ENCODE measurements at regions of chr17 and their contacts with region 1.

Region 1: DNA sequence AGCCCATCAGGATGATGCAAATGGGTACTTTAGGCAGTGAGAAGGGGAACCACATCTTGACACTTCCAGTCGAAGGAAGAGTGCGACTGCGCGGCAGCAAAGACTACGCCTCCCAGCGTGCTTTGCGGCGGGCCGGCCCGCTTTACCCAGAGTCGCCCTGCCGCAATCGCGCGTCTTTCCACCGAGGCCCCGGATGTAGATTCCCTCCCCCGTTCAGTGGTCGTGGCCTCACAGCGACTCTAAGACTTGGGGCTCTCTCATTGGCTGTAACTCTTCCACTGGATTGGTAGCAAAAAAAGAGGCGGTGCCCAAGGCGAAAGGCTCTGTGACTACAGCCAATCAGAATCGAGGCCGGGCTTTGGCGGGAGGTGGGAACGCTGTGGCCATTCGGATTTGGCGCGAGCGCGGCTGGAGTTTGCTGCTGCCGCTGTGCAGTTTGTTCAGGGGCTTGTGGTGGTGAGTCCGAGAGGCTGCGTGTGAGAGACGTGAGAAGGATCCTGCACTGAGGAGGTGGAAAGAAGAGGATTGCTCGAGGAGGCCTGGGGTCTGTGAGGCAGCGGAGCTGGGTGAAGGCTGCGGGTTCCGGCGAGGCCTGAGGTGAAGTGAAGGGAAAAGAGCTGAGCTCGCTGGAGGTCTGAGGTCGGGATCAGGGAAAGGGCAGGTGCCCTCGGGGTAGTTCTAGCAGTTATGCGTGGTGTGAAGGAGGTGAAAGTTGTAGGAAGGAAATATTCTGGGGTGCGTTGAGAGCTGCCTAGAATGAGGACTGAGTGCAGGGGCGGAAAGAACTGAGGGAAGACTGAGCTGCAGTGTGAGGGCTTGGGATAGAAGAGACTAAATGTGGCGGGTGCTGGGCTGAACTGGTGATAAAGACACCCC is at the start of gene CDC6:
- DNase-seq: peak; percentile 99
- ATAC-seq: peak; percentile 98
- H3K4me3 ChIP-seq: peak within 1 kb of the TSS in 1 of 2 donors; percentile 12
- H3K27ac ChIP-seq: no peak within 1 kb of the TSS
- H3K4me1 ChIP-seq: peaks cover 0 to 5% of the 10 kb centered on the region in 2 donors
- H3K27me3 ChIP-seq: no peaks in the 10 kb centered on the region
- total RNA-seq, gene CDC6: 1.7 to 2.5 TPM

Region 2: GRCh38 chr17:40019140-40019991 is 268.4 kb before region 1 on chr17:
- intact Hi-C with region 1: loop called in 1 of 2 experiments (anchors 10 kb)
- DNase-seq: peak in 1 of 2 donors; percentile 79
- ATAC-seq: no peak
- H3K4me3 ChIP-seq: no peak overlapping the region
- H3K27ac ChIP-seq: no peak overlapping the region
- H3K4me1 ChIP-seq: no peaks in the 10 kb centered on the region
- H3K27me3 ChIP-seq: no peaks in the 10 kb centered on the region

Region 3: GRCh38 chr17:40098846-40099618 is 188.7 kb before region 1 on chr17:
- intact Hi-C with region 1: loop called in 1 of 2 experiments (anchors 10 kb)
- DNase-seq: peak; percentile 100
- ATAC-seq: peak; percentile 90
- H3K4me3 ChIP-seq: peak overlapping the region; percentile 43 to 76
- H3K27ac ChIP-seq: peak overlapping the region; percentile 87 to 92
- H3K4me1 ChIP-seq: no peaks in the 10 kb centered on the region
- H3K27me3 ChIP-seq: no peaks in the 10 kb centered on the region

Region 4: DNA sequence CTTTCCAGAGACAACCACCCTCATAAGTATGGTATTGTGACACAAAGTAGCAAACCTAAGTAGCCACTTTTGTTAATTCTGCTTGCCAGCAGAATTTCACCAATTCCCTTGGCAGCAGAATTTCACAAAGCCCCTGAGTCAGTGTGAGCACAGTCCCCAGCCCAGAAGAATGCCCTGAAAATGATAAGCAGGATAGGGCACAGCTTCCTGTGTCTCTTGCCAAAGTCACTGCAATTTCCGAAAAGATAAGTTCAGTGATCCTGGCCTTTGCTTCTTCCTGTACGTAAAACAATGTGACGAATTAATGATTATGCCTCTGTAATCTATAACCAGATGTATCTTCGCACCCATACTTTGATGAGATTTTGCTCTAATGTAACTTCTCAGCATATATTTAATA is 84.6 kb before region 1 on chr17:
- intact Hi-C with region 1: loop called in 1 of 2 experiments (anchors 5 kb)
- DNase-seq: no peak
- ATAC-seq: no peak
- H3K4me3 ChIP-seq: no peak overlapping the region
- H3K27ac ChIP-seq: no peak overlapping the region
- H3K4me1 ChIP-seq: no peaks in the 10 kb centered on the region
- H3K27me3 ChIP-seq: no peaks in the 10 kb centered on the region

Region 5: GRCh38 chr17:40382251-40382650 is 94.5 kb after region 1 on chr17:
- intact Hi-C with region 1: no loop called
- DNase-seq: no peak
- ATAC-seq: no peak
- H3K4me3 ChIP-seq: no peak overlapping the region
- H3K27ac ChIP-seq: no peak overlapping the region
- H3K4me1 ChIP-seq: no peaks in the 10 kb centered on the region
- H3K27me3 ChIP-seq: no peaks in the 10 kb centered on the region